ENCODE measurements at regions of chr7 and their contacts with region 1.

Region 1: GRCh38 chr7:129367700-129368388 is 66.4 kb upstream of the STRIP2 start:
- DNase-seq: peak; percentile 77
- H3K4me3 ChIP-seq: no peak overlapping the region
- H3K27ac ChIP-seq: no peak overlapping the region
- H3K4me1 ChIP-seq: peaks cover 4% of the 10 kb centered on the region
- H3K27me3 ChIP-seq: no peaks in the 10 kb centered on the region
- CTCF ChIP-seq: peak; percentile 85 to 89
- POLR2A ChIP-seq: no peak

Region 2: GRCh38 chr7:129343099-129343700 is 24.6 kb before region 1 on chr7:
- CTCF ChIA-PET with region 1: interaction called, 39 read pairs
- POLR2A ChIA-PET with region 1: no interaction called
- dilution Hi-C with region 1: no loop called
- intact Hi-C with region 1: no loop called
- DNase-seq: peak; percentile 68
- H3K4me3 ChIP-seq: no peak overlapping the region
- H3K27ac ChIP-seq: no peak overlapping the region
- H3K4me1 ChIP-seq: no peaks in the 10 kb centered on the region
- H3K27me3 ChIP-seq: no peaks in the 10 kb centered on the region
- CTCF ChIP-seq: peak; percentile 48 to 54
- POLR2A ChIP-seq: no peak

Region 3: DNA sequence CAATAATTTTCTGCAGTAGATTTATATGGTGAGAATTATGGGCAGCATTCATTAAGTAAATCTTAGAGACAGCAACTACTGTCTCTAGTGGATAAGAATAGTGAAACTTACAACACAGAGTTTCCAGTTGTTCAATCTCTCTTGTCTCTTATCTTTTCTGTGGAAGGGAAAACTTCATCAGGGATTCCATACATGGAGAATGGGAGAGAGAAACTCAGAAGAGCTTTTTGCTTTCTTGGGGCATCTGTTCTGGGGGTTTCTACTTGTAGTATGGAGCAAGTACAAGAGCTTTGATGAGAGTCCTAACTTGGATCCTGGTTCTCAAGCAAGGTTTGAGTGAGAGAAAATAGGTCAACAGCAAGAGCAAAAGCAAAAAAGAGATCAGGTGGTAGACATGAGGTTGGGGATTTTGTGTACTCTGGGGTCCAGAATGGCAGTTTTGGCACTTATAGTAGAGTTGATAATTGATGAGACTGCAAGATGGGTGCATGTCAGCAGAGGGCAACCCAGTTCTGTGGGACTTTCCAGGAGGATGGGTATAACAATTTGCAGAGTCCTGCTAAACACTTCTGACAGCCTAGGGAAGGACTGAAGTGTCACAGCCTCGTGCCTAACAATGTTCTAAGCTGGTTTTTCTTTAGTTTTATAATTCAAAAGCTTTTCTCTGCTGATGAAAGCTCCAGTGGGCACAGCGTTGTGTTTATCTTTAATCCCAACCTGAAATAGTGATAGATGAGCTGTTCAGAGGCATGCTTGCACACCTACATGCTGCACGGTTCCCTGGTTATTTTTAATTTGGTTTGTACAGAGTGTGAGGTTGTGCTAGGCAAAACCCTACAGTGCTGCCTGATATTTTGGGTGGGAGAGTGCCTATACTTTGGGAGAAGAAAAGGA is 34.4 kb after region 1 on chr7:
- CTCF ChIA-PET with region 1: interaction called, 18 read pairs
- POLR2A ChIA-PET with region 1: no interaction called
- dilution Hi-C with region 1: no loop called
- intact Hi-C with region 1: no loop called
- DNase-seq: no peak
- H3K4me3 ChIP-seq: no peak overlapping the region
- H3K27ac ChIP-seq: no peak overlapping the region
- H3K4me1 ChIP-seq: peaks cover 9% of the 10 kb centered on the region
- H3K27me3 ChIP-seq: no peaks in the 10 kb centered on the region
- CTCF ChIP-seq: no peak
- POLR2A ChIP-seq: no peak

Region 4: DNA sequence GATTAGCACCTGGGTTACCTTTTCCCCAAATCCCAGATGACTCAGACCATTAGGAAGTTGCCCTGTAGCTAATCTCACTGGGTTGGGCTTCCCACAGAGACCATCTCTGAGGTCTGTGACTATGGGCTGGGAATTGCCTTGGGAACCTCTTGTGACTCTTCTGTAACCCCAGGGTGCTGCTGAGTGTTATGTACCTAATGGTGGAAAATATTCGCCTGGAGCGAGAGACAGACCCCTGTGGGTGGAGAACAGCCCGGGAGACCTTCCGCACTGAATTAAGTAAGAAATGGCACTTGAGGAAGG is 86.4 kb after region 1 on chr7:
- CTCF ChIA-PET with region 1: interaction called, 17 read pairs
- POLR2A ChIA-PET with region 1: no interaction called
- dilution Hi-C with region 1: no loop called
- intact Hi-C with region 1: no loop called
- DNase-seq: no peak
- H3K4me3 ChIP-seq: no peak overlapping the region
- H3K27ac ChIP-seq: no peak overlapping the region
- H3K4me1 ChIP-seq: no peaks in the 10 kb centered on the region
- H3K27me3 ChIP-seq: no peaks in the 10 kb centered on the region
- CTCF ChIP-seq: no peak
- POLR2A ChIP-seq: no peak

Region 5: GRCh38 chr7:129611246-129612111 is 243.6 kb after region 1 on chr7 and contains the start of gene NRF1:
- CTCF ChIA-PET with region 1: interaction called, 12 read pairs
- POLR2A ChIA-PET with region 1: no interaction called
- dilution Hi-C with region 1: no loop called
- intact Hi-C with region 1: loop called (anchors 1 kb)
- DNase-seq: peak; percentile 92
- H3K4me3 ChIP-seq: peak within 1 kb of the TSS; percentile 84 to 96 (median 95)
- H3K27ac ChIP-seq: peak within 1 kb of the TSS; percentile 81
- H3K4me1 ChIP-seq: peaks cover 13% of the 10 kb centered on the region
- H3K27me3 ChIP-seq: no peaks in the 10 kb centered on the region
- CTCF ChIP-seq: peak in 1 of 2 donors; percentile 10
- POLR2A ChIP-seq: peak; percentile 87
- total RNA-seq, gene NRF1: 17.4 and 20.3 TPM in 2 replicates

Region 6: GRCh38 chr7:129644634-129645230 is 276.9 kb after region 1 on chr7:
- CTCF ChIA-PET with region 1: interaction called, 54 read pairs
- POLR2A ChIA-PET with region 1: no interaction called
- dilution Hi-C with region 1: no loop called
- intact Hi-C with region 1: loop called (anchors 2 kb)
- DNase-seq: peak; percentile 66
- H3K4me3 ChIP-seq: no peak overlapping the region
- H3K27ac ChIP-seq: no peak overlapping the region
- H3K4me1 ChIP-seq: peaks cover 16% of the 10 kb centered on the region
- H3K27me3 ChIP-seq: no peaks in the 10 kb centered on the region
- CTCF ChIP-seq: peak in 1 of 2 donors; percentile 15
- POLR2A ChIP-seq: no peak

Region 7: DNA sequence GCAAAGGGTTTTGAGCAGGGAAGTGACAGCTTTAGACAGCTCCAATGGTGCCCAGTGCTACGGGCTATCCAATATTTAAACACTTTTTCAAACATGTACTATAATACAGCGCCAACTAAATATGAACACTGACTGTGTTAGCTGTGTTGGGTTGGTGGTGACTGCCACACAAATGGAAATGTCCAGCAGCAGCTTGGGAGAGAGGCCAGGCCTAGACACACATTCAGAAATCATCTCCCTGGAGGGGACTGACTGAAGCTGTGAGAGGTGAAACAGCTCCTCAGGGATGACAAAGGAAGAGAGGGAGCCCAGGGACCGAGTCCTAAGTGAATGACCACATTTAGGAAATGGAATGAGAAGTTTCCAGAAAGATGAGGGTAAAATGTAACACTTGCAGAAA is 469.1 kb after region 1 on chr7:
- CTCF ChIA-PET with region 1: no interaction called
- POLR2A ChIA-PET with region 1: no interaction called
- dilution Hi-C with region 1: no loop called
- intact Hi-C with region 1: no loop called
- DNase-seq: no peak
- H3K4me3 ChIP-seq: no peak overlapping the region
- H3K27ac ChIP-seq: no peak overlapping the region
- H3K4me1 ChIP-seq: no peaks in the 10 kb centered on the region
- H3K27me3 ChIP-seq: no peaks in the 10 kb centered on the region
- CTCF ChIP-seq: no peak
- POLR2A ChIP-seq: no peak